Activated CD4-positive, alpha-beta T cell treated with anti-CD3 and anti-CD28 coated beads, Interleukin-2, amount 10 ng/mL, durations not matched to agents 24 days and 14 days (primary cell): ENCODE measurements at regions of chrX and their contacts with region 1.

Region 1: DNA sequence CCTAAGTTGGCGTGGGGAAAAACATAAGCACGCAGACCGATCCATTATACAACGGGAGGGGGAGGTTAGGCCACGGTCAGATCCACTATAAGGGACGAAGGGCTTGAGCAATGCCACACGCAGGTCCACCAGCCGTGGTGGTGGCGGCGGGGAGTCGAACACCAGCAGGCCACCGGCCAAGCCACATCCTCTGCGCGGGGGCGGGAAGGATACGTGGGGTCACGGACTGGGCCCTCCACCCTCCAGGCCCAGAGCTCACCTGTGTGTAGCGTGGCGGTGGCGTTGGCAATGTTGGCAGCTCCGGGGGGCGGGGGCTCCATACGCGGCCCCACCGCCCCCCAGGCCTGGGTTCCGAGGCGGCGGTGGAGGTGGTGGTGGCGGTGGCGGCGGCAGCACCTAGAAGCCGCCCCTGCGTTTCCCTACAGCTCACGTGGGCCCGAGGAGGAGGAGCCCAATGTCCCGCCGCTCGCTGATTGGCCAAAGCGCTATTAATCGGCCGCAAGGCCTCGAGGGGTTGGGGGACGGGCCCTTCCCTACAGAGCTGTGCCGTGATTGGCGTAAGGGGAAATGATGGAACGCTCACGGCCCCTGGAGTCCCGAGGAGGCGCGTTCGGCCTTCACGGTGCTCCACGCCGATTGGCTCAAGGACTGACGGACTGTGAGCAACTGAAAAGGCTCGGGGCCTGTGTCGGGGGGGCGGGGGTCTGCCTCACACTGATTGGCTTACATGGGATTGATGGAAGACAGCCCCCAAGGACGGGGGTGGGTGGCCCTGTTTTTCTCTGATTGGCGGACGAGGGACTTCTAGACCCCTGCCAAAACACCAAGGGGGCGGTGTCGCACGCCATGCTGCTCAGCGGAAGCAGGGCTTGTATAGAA is at the start of gene ELK1:
- DNase-seq: peak; percentile 96
- H3K4me3 Mint-ChIP-seq: peak within 1 kb of the TSS; percentile 93
- H3K27ac Mint-ChIP-seq: peak within 1 kb of the TSS; percentile 94
- H3K4me1 Mint-ChIP-seq: peaks cover 49% of the 10 kb centered on the region
- H3K27me3 Mint-ChIP-seq: no peaks in the 10 kb centered on the region
- total RNA-seq, gene ELK1: 104 and 112 TPM in 2 replicates

Region 2: GRCh38 chrX:47217642-47218279 is 432.6 kb before region 1 on chrX:
- intact Hi-C with region 1: loop called (anchors 5 kb)
- DNase-seq: peak; percentile 98
- H3K4me3 Mint-ChIP-seq: peak overlapping the region; percentile 92
- H3K27ac Mint-ChIP-seq: peak overlapping the region; percentile 99
- H3K4me1 Mint-ChIP-seq: peaks cover 37% of the 10 kb centered on the region
- H3K27me3 Mint-ChIP-seq: no peaks in the 10 kb centered on the region

Region 3: DNA sequence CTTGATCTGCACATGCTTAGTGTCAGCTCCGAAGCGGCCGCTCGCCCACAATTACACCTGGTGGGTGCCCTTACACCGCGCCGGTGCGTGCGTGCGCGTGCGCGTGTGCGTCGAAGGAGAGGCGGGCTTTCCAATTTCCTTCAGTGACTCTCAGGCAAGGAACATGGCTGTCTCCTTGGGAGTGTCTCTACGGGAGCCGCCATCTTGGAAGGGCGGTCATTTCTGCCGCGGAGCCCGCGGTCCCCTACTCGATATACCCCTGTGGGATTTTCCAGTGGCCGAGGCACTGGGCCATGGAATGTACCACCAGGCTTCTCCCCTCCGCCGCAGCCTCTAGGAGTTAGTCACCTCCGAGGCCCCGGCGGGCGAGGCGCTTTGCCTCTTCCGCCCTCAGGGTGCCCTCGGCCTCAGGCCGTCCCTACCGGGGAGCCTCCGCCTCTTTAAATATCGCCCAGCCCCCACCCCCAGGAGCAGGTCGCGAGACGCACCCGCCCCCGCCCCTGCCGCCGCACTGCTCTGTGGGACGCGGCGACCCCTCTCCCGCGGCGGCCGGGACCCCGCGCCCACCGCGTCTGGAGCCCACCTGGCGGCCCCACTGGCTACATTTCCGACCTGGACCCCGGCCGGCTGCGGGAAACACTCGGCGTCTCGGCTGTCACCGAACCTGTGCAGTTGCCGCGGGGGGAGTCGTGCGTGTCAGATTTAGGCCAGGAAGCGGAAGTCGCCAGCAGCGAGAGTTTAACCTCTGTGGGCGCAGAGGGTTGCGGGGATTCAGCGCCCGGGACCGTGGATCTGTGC is 167.7 kb before region 1 on chrX and contains the start of gene ZNF41:
- intact Hi-C with region 1: loop called (anchors 5 kb)
- DNase-seq: peak; percentile 90
- H3K4me3 Mint-ChIP-seq: peak within 1 kb of the TSS; percentile 97
- H3K27ac Mint-ChIP-seq: peak within 1 kb of the TSS; percentile 90
- H3K4me1 Mint-ChIP-seq: peaks cover 17% of the 10 kb centered on the region
- H3K27me3 Mint-ChIP-seq: no peaks in the 10 kb centered on the region
- total RNA-seq, gene ZNF41: 10.0 and 10.5 TPM in 2 replicates

Region 4: DNA sequence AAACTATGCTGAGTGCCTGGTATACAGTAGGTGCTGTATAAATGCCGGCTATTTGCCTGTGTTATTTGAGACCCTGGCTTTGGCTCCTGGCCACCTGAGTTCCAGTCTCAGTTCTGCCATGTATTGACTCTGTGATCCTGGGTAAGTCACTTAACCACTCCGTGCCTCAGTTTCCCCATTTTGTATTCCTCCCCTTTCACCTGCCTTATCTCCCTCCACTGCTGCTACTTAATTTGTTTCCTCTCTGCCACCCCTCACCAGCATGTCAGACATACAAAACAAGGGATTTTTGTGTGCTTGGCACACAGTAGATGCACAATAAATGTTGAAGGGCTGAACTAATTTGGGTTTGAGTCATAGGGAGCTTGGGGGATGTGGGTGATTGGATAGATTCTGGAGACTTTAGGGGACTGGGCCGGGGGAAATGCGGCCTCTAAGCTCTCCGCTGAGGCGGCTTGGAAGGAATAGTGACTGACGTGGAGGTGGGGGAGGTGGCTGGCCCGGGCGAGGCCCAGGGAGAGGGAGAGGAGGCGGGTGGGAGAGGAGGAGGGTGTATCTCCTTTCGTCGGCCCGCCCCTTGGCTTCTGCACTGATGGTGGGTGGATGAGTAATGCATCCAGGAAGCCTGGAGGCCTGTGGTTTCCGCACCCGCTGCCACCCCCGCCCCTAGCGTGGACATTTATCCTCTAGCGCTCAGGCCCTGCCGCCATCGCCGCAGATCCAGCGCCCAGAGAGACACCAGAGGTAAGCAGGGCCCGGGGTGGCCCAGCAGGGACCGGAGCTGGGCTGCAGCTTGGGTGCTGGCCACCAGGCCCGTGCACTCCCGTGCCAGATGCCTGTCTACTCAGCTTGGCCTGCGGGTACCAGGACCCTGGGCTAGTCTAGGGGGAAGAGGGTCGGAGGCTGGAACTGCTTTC is 68.4 kb before region 1 on chrX and contains the start of gene TIMP1:
- intact Hi-C with region 1: loop called (anchors 2 kb)
- DNase-seq: peak; percentile 93
- H3K4me3 Mint-ChIP-seq: peak within 1 kb of the TSS; percentile 80
- H3K27ac Mint-ChIP-seq: peak within 1 kb of the TSS; percentile 81
- H3K4me1 Mint-ChIP-seq: peaks cover 40% of the 10 kb centered on the region
- H3K27me3 Mint-ChIP-seq: peaks cover under 1% of the 10 kb centered on the region
- total RNA-seq, gene TIMP1: 65.2 and 65.6 TPM in 2 replicates

Region 5: DNA sequence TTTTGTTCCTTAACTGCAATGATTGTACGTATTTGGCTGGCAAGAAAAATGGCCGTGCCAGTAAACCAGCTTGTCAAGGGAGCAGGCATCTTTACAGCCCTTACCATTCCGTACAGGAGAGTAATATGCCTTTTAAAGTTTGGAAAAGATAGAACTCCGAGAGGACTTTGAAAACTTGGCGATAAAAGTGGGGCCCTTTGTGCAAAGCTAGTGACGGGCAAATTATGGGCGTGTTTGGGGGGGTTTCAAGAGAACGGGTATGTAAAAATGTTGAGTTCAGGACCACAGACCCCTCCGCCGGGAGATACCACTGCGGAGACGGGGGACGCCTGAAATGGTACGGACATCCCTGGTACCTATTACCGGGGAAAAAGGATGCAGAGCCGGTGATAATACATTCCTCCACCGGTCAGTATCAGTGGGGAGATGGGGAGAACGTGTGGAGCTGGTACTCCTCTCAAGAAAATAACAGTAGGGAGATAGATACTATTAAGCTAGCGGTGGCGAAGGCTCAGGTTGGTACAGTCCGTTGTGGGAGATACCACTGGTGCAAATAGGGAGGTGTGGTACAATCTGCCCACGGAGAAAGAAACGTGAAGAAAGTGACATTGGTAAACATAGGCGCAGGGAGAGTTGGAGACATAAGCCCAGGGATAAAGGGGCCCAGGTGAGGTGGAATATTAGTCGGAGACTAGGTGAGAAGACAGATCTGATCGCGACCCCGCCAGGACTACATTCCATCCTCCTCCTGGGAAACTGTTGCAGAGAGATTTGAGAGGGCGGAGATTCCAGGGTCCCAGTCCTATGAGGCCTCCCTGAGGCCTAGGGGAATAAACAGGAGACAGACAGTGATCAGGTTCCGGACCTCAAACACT is 370.9 kb after region 1 on chrX:
- intact Hi-C with region 1: loop called (anchors 5 kb)
- DNase-seq: peak; percentile 89
- H3K4me3 Mint-ChIP-seq: peak overlapping the region; percentile 94
- H3K27ac Mint-ChIP-seq: peak overlapping the region; percentile 98
- H3K4me1 Mint-ChIP-seq: peaks cover 16% of the 10 kb centered on the region
- H3K27me3 Mint-ChIP-seq: no peaks in the 10 kb centered on the region